ENCODE measurements at regions of chr16 and their contacts with region 1.

Region 1: GRCh38 chr16:4957720-4958509 is at the start of gene SEC14L5:
- DNase-seq: peak; percentile 99
- H3K4me3 ChIP-seq: peak within 1 kb of the TSS; percentile 53 to 72 (median 60)
- H3K27ac ChIP-seq: peak within 1 kb of the TSS; percentile 64 to 78 (median 72)
- H3K4me1 ChIP-seq: peaks cover 16 to 35% (median 31%) of the 10 kb centered on the region in 4 donors
- H3K27me3 ChIP-seq: no peaks in the 10 kb centered on the region
- CTCF ChIP-seq: no peak
- EP300 ChIP-seq: no peak
- POLR2A ChIP-seq: no peak
- total RNA-seq, gene SEC14L5: 0.83 to 1.8 (median 1.1) TPM

Region 2: DNA sequence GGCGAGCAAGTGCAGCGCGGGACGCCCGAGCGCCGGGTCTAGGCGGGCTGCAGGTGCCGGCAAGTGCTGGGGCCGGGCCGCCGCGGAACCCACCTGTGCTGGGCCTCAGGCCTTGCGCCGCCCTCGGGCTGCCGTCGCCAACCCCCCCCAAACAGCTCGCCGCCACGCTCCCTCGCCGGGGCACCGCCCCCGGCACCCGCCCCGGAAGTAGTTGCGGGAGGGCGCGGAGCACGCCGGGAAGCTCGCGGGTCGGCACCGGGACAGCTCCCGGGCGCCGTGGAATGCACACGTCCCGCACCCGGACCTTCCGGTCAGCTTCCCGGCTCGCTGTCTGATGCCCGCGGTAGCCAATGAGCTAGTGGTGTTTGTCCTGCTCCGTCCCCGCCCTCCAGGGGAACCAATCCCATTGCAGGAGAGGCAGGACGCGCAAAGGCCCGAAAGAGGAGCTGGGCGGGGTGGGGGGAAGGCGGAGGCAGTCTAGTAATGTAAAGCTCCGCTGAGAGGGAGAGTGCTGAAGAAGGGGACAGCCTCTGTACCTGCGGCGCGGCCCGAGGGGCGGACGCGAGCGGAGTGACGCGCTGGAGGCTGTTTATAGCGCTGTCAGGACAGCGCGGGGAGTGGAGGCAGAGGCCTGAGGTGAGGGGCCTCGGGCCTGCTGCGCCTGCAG is 223.7 kb before region 1 on chr16 and contains the starts of genes ANKS3 and DNAAF8:
- intact Hi-C with region 1: loop called (anchors 10 kb)
- DNase-seq: peak; percentile 98
- H3K4me3 ChIP-seq: peak within 1 kb of the TSS; percentile 82 to 99 (median 90)
- H3K27ac ChIP-seq: peak within 1 kb of the TSS; percentile 79 to 97 (median 88)
- H3K4me1 ChIP-seq: peaks cover 12 to 27% (median 19%) of the 10 kb centered on the region in 4 donors
- H3K27me3 ChIP-seq: peaks cover 0 to 3% (median 0%) of the 10 kb centered on the region in 4 donors
- CTCF ChIP-seq: peak in 1 of 3 experiments; percentile 11
- EP300 ChIP-seq: no peak
- POLR2A ChIP-seq: no peak
- total RNA-seq, gene ANKS3: 17.0 to 29.0 (median 24.7) TPM
- total RNA-seq, gene DNAAF8: 0.42 to 1.7 (median 0.94) TPM

Region 3: DNA sequence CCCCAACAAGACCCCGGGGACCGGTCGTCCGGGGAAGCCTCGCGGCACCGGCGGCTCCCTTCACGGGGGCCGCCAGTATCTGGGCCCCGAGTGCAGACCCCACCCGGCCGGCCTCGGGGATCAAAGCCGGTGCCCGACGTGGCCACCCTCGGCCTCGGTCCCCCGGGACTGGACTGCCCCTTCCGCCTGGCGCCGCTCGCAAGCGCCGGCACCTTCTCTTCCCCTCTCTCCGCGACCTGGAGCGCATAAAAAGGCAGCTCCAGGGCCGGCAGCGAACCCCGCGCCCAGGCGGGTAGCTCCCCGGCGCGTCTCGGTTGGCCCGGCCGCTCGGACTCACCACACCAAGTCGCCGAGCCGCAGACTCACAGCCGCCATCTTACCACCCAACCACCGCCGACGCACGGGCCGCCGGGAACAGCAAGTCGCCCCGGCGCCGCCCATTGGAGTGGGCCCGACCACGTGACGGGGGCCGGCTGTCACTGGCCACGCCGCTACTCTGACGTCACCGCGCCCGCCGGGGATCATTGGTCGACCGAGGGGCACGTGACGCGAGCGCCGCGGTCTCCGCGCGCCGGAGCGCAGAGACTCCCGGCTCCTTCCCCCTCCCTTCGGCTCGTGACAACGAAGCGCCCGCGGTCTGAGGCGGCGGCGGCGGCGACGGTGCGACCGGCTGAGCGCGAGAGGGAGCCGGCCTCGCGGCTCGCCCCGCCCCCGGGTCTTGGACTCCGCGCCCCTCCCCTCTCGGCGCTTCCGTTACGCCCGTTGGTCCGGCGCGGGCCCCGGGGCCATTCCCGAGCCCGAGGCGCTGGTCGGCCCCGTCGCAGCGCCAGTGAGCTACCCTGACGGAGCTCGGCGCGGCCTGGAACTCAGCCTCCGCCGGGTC is 110.8 kb before region 1 on chr16 and contains the starts of genes GLYR1 and UBN1:
- intact Hi-C with region 1: loop called (anchors 1 kb)
- DNase-seq: peak; percentile 100
- H3K4me3 ChIP-seq: peak within 1 kb of the TSS; percentile 90 to 97 (median 94)
- H3K27ac ChIP-seq: peak within 1 kb of the TSS; percentile 97 to 99 (median 97)
- H3K4me1 ChIP-seq: peaks cover 52 to 61% (median 59%) of the 10 kb centered on the region in 4 donors
- H3K27me3 ChIP-seq: no peaks in the 10 kb centered on the region
- CTCF ChIP-seq: no peak
- EP300 ChIP-seq: no peak
- POLR2A ChIP-seq: peak; percentile 41
- total RNA-seq, gene GLYR1: 81.8 to 111 (median 98.8) TPM
- total RNA-seq, gene UBN1: 21.0 to 48.2 (median 41.1) TPM